CD8-positive, alpha-beta T cell (primary cell): ENCODE measurements at regions of chr12 and their contacts with region 1.

Region 1: GRCh38 chr12:6062757-6063735 is 61.4 kb downstream of the VWF start:
- DNase-seq: peak; percentile 39 to 81 (median 64)
- ATAC-seq: peak; percentile 99
- H3K4me3 ChIP-seq: no peak overlapping the region
- H3K4me3 Mint-ChIP-seq: no peak overlapping the region
- H3K27ac ChIP-seq: no peak overlapping the region
- H3K27ac Mint-ChIP-seq: no peak overlapping the region
- H3K4me1 ChIP-seq: no peaks in the 10 kb centered on the region
- H3K4me1 Mint-ChIP-seq: peaks cover 3% of the 10 kb centered on the region
- H3K27me3 ChIP-seq: no peaks in the 10 kb centered on the region
- H3K27me3 Mint-ChIP-seq: peaks cover 3% of the 10 kb centered on the region
- CTCF ChIP-seq: peak; percentile 84

Region 2: DNA sequence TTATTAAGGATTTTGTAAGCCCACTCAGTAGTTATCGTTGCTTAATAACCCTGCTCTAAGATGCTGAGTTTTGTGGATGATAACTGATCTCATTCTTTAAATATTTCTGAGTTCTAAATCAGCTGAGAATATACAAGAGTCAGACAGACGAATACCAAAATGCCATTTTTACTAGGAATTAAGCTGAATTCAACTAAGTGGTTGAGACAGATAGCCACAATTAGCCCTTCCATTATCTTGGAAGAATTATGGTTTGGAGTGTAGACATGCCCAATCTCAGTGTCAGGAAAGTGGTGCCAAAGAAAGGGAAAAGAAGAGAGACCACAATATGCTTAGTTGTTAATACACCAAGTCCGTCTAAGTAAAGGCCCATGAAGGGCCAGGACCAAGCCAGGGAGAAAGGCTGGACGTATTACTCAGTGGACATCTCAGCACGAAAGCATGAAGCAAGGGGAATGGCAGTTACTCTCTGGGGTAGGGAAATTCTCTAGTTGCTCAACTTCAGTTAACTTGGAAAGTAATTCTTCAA is 960.7 kb before region 1 on chr12:
- CTCF ChIA-PET with region 1: no interaction called
- POLR2A ChIA-PET with region 1: no interaction called
- intact Hi-C with region 1: no loop called
- DNase-seq: no peak
- ATAC-seq: no peak
- H3K4me3 ChIP-seq: no peak overlapping the region
- H3K4me3 Mint-ChIP-seq: no peak overlapping the region
- H3K27ac ChIP-seq: no peak overlapping the region
- H3K27ac Mint-ChIP-seq: no peak overlapping the region
- H3K4me1 ChIP-seq: no peaks in the 10 kb centered on the region
- H3K4me1 Mint-ChIP-seq: no peaks in the 10 kb centered on the region
- H3K27me3 ChIP-seq: no peaks in the 10 kb centered on the region
- H3K27me3 Mint-ChIP-seq: no peaks in the 10 kb centered on the region
- CTCF ChIP-seq: no peak

Region 3: GRCh38 chr12:6230321-6231110 is 167.5 kb after region 1 on chr12:
- CTCF ChIA-PET with region 1: interaction called, 3 read pairs
- POLR2A ChIA-PET with region 1: no interaction called
- intact Hi-C with region 1: loop called (anchors 1 to 2 kb)
- DNase-seq: peak; percentile 53 to 91 (median 79)
- ATAC-seq: peak; percentile 96
- H3K4me3 ChIP-seq: no peak overlapping the region
- H3K4me3 Mint-ChIP-seq: peak overlapping the region; percentile 38
- H3K27ac ChIP-seq: peak overlapping the region; percentile 3 to 55
- H3K27ac Mint-ChIP-seq: peak overlapping the region; percentile 90
- H3K4me1 ChIP-seq: peaks cover 33% of the 10 kb centered on the region
- H3K4me1 Mint-ChIP-seq: peaks cover 34% of the 10 kb centered on the region
- H3K27me3 ChIP-seq: no peaks in the 10 kb centered on the region
- H3K27me3 Mint-ChIP-seq: no peaks in the 10 kb centered on the region
- CTCF ChIP-seq: no peak